ENCODE measurements at regions of chr15 and their contacts with region 1.

Region 1: DNA sequence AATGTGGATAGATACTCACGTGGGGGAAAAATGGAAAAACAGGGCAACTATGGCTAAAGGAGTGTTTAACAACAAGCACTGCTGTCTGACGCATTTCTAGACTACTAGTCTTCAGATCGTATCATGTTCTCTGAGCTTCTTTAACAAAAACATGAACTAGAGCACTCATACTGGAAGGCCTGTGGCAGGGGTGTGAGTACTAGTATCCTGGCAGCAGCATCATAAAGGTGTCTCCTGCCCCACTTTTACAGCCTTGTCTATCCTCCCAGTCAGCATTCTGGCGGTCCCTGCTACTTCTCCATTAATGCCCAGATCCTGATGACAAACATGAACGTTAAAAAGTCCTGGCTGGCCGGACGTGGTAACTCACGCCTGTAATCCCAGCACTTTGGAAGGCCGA is 4.0 kb downstream of the FMN1 start:
- DNase-seq: no peak
- ATAC-seq: no peak
- H3K4me3 ChIP-seq: no peak overlapping the region
- H3K27ac ChIP-seq: no peak overlapping the region
- H3K4me1 ChIP-seq: peaks cover 0 to 13% (median 5%) of the 10 kb centered on the region in 9 donors
- H3K27me3 ChIP-seq: peaks cover 0 to 18% (median 9%) of the 10 kb centered on the region in 7 donors
- CTCF ChIP-seq: no peak

Region 2: DNA sequence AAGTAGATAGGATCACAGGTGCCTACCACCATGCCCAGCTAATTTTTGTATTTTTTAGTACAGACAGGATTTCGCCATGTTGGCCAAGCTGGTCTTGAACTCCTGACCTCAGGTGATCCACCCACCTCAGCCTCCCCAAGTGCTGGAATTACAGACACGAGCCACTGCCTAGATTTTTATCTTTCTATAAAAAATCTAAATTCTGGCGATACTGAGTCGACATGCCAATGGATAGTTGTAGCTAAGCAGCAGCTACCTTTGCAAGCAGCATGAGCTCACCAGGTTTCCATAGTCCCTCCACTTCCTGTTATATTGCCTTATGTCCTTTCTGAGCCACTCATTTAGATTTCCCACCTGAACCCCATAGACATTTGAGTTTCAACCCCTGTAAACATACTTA is 17.1 kb after region 1 on chr15:
- intact Hi-C with region 1: loop called in 1 of 10 experiments (anchors 2 kb)
- DNase-seq: no peak
- ATAC-seq: no peak
- H3K4me3 ChIP-seq: no peak overlapping the region
- H3K27ac ChIP-seq: no peak overlapping the region
- H3K4me1 ChIP-seq: no peaks in the 10 kb centered on the region
- H3K27me3 ChIP-seq: no peaks in the 10 kb centered on the region
- CTCF ChIP-seq: no peak